GM12878 (cell line): ENCODE measurements at regions of chr11 and their contacts with region 1.

Region 1: GRCh38 chr11:30196400-30197206 is 34.2 kb upstream of the FSHB start:
- DNase-seq: no peak
- ATAC-seq: peak; percentile 98
- H3K4me3 ChIP-seq: no peak overlapping the region
- H3K27ac ChIP-seq: no peak overlapping the region
- H3K4me1 ChIP-seq: no peaks in the 10 kb centered on the region
- H3K27me3 ChIP-seq: no peaks in the 10 kb centered on the region; a peak in 1 of 4 replicates
- CTCF ChIP-seq: peak; percentile 76 to 88 (median 85)
- EP300 ChIP-seq: no peak
- POLR2A ChIP-seq: no peak
- RAD21 ChIP-seq: peak; percentile 73

Region 2: GRCh38 chr11:30244265-30244664 is 47.7 kb after region 1 on chr11:
- CTCF ChIA-PET with region 1: interaction called, 22 read pairs
- POLR2A ChIA-PET with region 1: no interaction called
- RAD21 ChIA-PET with region 1: interaction called, 7 read pairs
- SMC1A ChIA-PET with region 1: interaction called, 10 read pairs
- in situ Hi-C with region 1: no loop called
- intact Hi-C with region 1: no loop called
- DNase-seq: no peak
- ATAC-seq: no peak
- H3K4me3 ChIP-seq: no peak overlapping the region
- H3K27ac ChIP-seq: no peak overlapping the region
- H3K4me1 ChIP-seq: no peaks in the 10 kb centered on the region
- H3K27me3 ChIP-seq: 0 out of 4 replicates have a peak, but pooled peaks cover 0 to 1% of the 10 kb centered on the region in 2 experiments
- CTCF ChIP-seq: no peak
- EP300 ChIP-seq: no peak
- POLR2A ChIP-seq: no peak
- RAD21 ChIP-seq: no peak

Region 3: DNA sequence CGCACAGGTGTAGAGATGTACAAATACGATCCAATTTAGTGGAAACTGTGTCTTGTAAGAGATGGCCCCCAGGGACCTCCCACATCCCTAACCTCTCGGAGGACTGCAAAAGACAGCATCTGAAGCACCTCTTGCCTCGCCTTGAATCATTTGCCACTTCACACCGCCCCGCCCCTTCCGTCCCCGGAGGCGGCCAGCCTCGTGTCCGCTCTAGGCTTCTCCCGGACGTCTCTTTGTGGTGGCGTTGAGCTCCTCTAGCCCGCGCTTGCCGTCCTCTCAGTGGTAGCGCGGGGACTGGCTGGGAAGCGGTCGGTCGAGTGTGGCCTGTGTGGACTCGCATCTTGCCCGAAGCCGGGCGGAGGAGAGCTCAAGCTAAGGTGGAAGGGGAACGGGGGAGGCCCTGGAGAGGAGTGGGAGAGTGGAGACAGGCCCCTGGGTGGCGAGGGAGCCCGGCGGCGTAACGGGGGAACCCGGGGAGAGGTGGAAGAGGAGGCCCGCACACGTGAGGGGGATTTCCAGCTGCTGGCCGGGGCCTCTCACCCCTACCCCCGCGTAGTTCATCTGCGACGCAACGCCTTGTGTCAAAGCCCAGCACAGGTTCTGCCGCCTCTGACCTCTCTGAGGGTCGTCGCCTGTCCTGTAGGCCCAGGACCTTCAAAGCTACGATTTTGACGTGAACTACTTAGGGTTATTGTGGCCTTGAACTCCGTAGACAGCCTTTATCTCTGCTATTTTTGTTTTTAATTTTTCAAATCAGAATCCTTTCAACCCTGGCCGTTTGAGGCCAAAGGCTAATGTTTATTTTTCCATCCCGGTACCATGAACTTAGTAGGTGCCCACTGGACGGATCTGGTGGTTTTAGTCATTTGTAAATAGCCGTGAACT is 126.5 kb after region 1 on chr11 and contains the start of gene ARL14EP:
- CTCF ChIA-PET with region 1: interaction called, 10 read pairs
- POLR2A ChIA-PET with region 1: no interaction called
- RAD21 ChIA-PET with region 1: interaction called, 3 read pairs
- SMC1A ChIA-PET with region 1: interaction called, 8 read pairs
- in situ Hi-C with region 1: no loop called
- intact Hi-C with region 1: no loop called
- DNase-seq: peak; percentile 82
- ATAC-seq: peak; percentile 91
- H3K4me3 ChIP-seq: peak within 1 kb of the TSS; percentile 100
- H3K27ac ChIP-seq: peak within 1 kb of the TSS; percentile 92
- H3K4me1 ChIP-seq: peaks cover 2% of the 10 kb centered on the region; the same call in 1 of the 2 replicates
- H3K27me3 ChIP-seq: no peaks in the 10 kb centered on the region
- CTCF ChIP-seq: no peak
- EP300 ChIP-seq: peak in 1 of 2 experiments; percentile 20; a peak in 1 of 4 replicates
- POLR2A ChIP-seq: peak; percentile 99
- RAD21 ChIP-seq: 0 out of 2 replicates have a peak, but pooled peaks have one; percentile 1
- polyA plus RNA-seq, gene ARL14EP: 41.3 to 56.7 TPM

Region 4: GRCh38 chr11:30422447-30423274 is 226.1 kb after region 1 on chr11:
- CTCF ChIA-PET with region 1: no interaction called
- POLR2A ChIA-PET with region 1: no interaction called
- RAD21 ChIA-PET with region 1: no interaction called
- SMC1A ChIA-PET with region 1: no interaction called
- in situ Hi-C with region 1: no loop called
- intact Hi-C with region 1: no loop called
- DNase-seq: no peak
- ATAC-seq: no peak
- H3K4me3 ChIP-seq: no peak overlapping the region
- H3K27ac ChIP-seq: no peak overlapping the region
- H3K4me1 ChIP-seq: no peaks in the 10 kb centered on the region
- H3K27me3 ChIP-seq: no peaks in the 10 kb centered on the region; a peak in 2 of 4 replicates
- CTCF ChIP-seq: no peak
- EP300 ChIP-seq: no peak
- POLR2A ChIP-seq: no peak
- RAD21 ChIP-seq: no peak